Activated naive CD4-positive, alpha-beta T cell treated with anti-CD3 and anti-CD28 coated beads for 36 hours (primary cell): ENCODE measurements at regions of chr2 and their contacts with region 1.

Region 1: DNA sequence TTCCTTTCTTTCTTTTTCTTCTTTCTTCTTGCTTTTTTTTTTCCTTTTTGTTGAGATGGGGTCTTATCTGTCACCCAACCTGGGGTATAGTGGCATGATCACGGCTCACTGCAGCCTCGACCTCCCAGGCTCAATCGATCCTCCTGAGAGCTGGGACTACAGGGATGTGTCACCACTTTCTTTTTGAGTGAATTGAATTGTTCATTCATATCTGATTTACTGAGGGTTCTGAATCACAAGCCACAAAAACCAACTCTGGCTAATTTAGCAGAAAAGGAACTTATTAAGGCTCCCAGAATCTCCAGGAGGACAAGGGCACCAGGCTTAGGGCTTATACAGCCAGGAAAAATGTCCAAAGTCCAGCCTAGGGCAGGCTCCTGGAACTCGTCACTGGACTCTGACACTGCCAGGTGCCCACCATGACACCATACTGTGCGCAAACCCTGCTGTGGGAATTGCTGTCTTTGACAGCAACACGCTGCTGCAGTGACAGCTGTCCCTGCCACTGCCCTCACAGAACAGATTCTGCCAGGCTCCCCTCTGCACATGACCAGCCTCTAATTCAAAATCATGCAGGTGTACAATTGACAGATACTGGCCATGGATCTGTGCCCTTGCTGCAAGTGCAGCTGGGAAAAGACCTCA is 42.9 kb upstream of the EML6 start:
- DNase-seq: peak; percentile 68
- H3K4me3 Mint-ChIP-seq: no peak overlapping the region
- H3K27ac Mint-ChIP-seq: peak overlapping the region; percentile 11
- H3K4me1 Mint-ChIP-seq: peaks cover 18% of the 10 kb centered on the region
- H3K27me3 Mint-ChIP-seq: peaks cover 37% of the 10 kb centered on the region

Region 2: DNA sequence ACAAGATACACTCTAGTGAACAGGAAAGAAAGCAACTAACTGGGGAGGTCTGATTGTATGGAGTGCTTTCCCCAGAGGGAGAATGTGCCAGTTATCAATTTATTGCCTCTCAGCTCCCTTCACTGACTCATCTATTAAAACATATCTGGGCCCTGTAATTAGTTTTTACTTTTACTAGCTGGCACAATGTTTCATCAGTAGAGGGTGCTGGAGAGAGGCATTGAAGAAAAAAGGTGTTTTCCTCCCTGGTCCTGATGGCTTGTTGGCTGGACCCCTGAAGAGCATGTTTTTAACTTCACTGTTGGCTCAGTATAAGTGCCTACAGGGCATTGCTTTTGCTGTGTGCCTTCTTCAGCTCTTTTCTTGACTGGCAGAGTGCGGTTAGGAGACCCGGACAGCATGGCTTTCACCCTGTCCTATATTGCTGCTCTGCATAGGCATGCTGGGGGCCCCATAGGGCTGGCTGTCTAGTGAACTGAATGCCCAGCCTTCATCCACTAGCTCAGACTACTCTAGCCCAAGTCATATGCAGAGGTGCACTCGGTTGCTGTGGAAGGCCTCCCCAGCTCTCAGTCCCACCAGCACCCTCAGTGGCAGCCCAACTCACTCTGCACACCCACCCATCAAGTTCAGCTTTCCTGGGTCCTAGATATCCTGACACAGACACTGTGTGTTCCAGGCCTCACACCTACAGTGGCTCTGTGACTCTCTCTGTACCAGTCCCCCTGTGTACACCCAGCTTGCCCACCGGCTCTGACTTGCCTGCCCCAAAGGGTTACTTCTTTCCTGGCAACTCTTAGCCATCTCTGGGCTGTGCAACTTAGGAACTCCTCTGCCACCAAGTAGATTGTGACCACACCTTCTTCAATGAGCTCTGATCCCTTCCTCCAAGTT is 627.4 kb before region 1 on chr2:
- CTCF ChIA-PET with region 1: no interaction called
- intact Hi-C with region 1: loop called (anchors 2 kb)
- DNase-seq: no peak
- H3K4me3 Mint-ChIP-seq: no peak overlapping the region
- H3K27ac Mint-ChIP-seq: peak overlapping the region; percentile 28
- H3K4me1 Mint-ChIP-seq: peaks cover 27% of the 10 kb centered on the region
- H3K27me3 Mint-ChIP-seq: no peaks in the 10 kb centered on the region

Region 3: DNA sequence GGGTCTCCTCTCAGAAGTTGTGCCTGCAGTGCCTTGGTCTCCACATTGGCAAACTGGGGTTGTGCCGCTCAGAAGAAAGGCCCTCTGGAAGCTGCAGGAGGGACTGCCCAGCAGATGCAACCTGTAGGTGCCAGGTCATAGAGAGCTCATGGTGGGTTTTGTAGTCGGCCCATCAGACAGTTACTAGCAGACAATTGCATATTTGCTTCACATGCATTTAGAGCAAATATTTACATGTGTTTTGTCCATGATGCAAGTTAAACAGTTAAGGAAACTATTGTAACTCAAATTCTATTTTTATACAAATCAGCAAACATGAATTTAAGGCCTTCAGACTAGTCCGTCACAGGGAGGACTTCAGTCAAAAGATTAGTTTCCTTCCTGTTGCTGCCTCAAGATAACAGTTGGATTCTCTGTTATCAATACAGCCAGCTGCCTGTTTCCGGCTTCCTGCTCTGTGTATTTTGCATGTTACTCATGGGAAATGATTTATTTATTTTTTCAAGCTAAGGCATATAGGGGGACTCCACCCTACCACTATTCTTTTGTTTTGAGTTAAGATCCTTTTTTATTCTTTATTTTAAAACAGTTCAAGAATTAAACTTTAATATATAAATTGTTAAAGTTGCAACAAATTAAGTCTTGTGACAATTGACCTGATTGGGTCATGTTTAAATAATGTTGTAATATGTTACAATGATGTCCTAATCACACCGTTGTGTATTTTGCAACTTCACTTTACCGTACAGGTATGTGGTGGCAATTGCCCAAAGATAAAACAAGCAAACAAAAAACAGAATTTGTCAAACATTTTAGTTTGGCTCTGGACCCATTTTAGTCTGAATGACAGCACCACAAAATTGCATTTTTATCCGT is 90.9 kb before region 1 on chr2:
- CTCF ChIA-PET with region 1: no interaction called
- intact Hi-C with region 1: loop called (anchors 1 kb)
- DNase-seq: peak; percentile 76
- H3K4me3 Mint-ChIP-seq: peak overlapping the region; percentile 27
- H3K27ac Mint-ChIP-seq: peak overlapping the region; percentile 90
- H3K4me1 Mint-ChIP-seq: peaks cover 85% of the 10 kb centered on the region
- H3K27me3 Mint-ChIP-seq: no peaks in the 10 kb centered on the region

Region 4: DNA sequence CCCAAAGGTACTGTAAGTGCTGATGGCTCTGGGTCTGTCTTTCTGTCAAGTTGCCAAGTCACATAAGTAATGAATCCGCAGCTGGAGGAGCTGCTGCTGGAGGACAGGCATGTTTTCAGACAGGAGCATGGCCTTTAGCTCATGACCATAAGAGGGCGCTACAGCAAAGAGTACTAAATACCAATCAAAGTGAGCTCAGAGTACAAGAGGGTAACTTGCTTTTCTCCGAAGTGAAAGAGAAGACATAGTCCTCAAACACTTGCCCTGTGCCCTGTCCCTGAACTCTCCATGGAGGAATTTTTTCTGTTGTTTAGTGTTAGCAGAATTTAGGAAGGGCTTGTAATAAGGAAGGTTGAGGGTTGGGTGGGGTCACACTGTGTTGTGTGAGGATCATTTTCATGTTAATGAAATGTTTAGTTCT is 15.1 kb before region 1 on chr2:
- CTCF ChIA-PET with region 1: interaction called, 50 read pairs
- intact Hi-C with region 1: no loop called
- DNase-seq: peak; percentile 73
- H3K4me3 Mint-ChIP-seq: no peak overlapping the region
- H3K27ac Mint-ChIP-seq: no peak overlapping the region
- H3K4me1 Mint-ChIP-seq: no peaks in the 10 kb centered on the region
- H3K27me3 Mint-ChIP-seq: no peaks in the 10 kb centered on the region

Region 5: DNA sequence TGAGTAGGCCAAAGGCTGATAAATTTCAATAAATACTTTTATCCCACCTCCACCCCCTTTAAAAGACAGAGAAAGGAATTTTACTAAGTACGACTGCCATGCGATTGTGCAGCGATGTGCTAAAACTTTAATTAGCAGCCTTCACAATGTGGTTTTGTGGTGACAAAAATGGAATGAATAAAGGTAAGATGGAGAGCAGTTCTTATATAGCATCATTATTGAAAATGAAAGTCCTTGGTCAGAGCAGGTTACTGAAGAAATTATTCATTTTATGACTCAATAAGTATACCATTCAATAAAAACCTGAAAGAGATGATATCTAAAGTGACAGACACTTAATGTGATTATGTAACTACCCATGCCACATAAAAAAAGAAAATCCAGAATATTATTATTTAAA is 621.7 kb after region 1 on chr2:
- CTCF ChIA-PET with region 1: no interaction called
- intact Hi-C with region 1: loop called (anchors 5 kb)
- DNase-seq: no peak
- H3K4me3 Mint-ChIP-seq: no peak overlapping the region
- H3K27ac Mint-ChIP-seq: no peak overlapping the region
- H3K4me1 Mint-ChIP-seq: peaks cover 9% of the 10 kb centered on the region
- H3K27me3 Mint-ChIP-seq: no peaks in the 10 kb centered on the region